Activated B cell treated with CpG ODN at 0.5 μM for 24 hours (primary cell): ENCODE measurements at regions of chr5 and their contacts with region 1.

Region 1: GRCh38 chr5:179732417-179732917 is at the start of gene MAML1:
- DNase-seq: peak; percentile 98
- ATAC-seq: peak; percentile 93
- H3K4me3 Mint-ChIP-seq: peak within 1 kb of the TSS; percentile 93
- H3K27ac Mint-ChIP-seq: peak within 1 kb of the TSS; percentile 91
- H3K4me1 Mint-ChIP-seq: peaks cover 37% of the 10 kb centered on the region
- H3K27me3 Mint-ChIP-seq: no peaks in the 10 kb centered on the region
- CTCF ChIP-seq: no peak
- total RNA-seq, gene MAML1: 33.6 and 38.8 TPM in 2 replicates

Region 2: DNA sequence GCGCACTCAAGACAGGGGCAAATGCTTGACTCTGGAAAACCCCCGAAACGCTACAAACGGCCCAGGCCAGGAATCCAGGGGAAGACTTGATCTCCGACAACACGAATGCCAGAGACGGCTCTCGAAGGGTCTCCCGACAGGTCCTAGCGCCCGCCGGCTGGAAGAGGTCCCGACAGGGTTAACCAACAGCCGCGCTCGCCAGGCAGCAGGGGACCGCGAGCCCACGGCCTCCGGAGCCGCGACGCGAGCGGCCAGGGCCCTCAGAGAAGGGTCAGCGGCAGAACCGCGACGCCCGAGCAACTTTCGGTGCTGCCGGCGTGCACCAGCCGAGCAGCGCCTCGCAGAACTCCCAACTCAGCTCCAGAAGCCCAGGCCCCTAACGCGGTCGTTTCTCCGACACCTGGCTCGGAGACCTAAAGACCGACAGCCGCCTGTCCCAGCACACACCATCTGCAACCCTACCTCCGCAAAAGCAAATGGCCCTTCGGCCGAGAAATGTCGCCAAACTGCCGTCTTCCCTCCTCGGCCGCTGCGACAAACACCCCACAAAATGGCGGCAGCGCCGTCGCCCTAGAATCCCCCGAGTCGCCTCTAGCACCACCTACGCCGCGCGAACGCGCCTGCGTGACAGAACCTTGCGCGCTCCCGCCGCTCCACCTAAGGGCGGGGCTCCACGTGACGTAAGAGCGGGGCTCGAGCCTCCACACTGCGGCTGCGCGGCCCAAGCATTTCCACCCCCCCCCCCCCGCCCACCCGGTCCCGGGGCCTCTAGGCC is 1105.8 kb before region 1 on chr5 and contains the start of gene CLK4:
- CTCF ChIA-PET with region 1: no interaction called
- POLR2A ChIA-PET with region 1: no interaction called
- intact Hi-C with region 1: loop called (anchors 10 kb)
- DNase-seq: peak; percentile 97
- ATAC-seq: peak; percentile 85
- H3K4me3 Mint-ChIP-seq: peak within 1 kb of the TSS; percentile 98
- H3K27ac Mint-ChIP-seq: peak within 1 kb of the TSS; percentile 98
- H3K4me1 Mint-ChIP-seq: peaks cover 59% of the 10 kb centered on the region
- H3K27me3 Mint-ChIP-seq: no peaks in the 10 kb centered on the region
- CTCF ChIP-seq: no peak
- total RNA-seq, gene CLK4: 62.4 and 65.3 TPM in 2 replicates

Region 3: GRCh38 chr5:179550511-179551230 is 181.8 kb before region 1 on chr5 and contains the start of gene RUFY1:
- CTCF ChIA-PET with region 1: no interaction called
- POLR2A ChIA-PET with region 1: interaction called, 5 read pairs
- intact Hi-C with region 1: loop called (anchors 2 kb)
- DNase-seq: peak; percentile 91
- ATAC-seq: peak; percentile 70
- H3K4me3 Mint-ChIP-seq: peak within 1 kb of the TSS; percentile 97
- H3K27ac Mint-ChIP-seq: peak within 1 kb of the TSS; percentile 100
- H3K4me1 Mint-ChIP-seq: peaks cover 60% of the 10 kb centered on the region
- H3K27me3 Mint-ChIP-seq: no peaks in the 10 kb centered on the region
- CTCF ChIP-seq: no peak
- total RNA-seq, gene RUFY1: 83.0 and 95.8 TPM in 2 replicates

Region 4: GRCh38 chr5:179697993-179698934 is 34.2 kb before region 1 on chr5:
- CTCF ChIA-PET with region 1: interaction called, 3 read pairs
- POLR2A ChIA-PET with region 1: interaction called, 35 read pairs
- intact Hi-C with region 1: loop called (anchors 1 kb)
- DNase-seq: peak; percentile 96
- ATAC-seq: peak; percentile 89
- H3K4me3 Mint-ChIP-seq: peak overlapping the region; percentile 97
- H3K27ac Mint-ChIP-seq: peak overlapping the region; percentile 99
- H3K4me1 Mint-ChIP-seq: peaks cover 41% of the 10 kb centered on the region
- H3K27me3 Mint-ChIP-seq: no peaks in the 10 kb centered on the region
- CTCF ChIP-seq: no peak

Region 5: DNA sequence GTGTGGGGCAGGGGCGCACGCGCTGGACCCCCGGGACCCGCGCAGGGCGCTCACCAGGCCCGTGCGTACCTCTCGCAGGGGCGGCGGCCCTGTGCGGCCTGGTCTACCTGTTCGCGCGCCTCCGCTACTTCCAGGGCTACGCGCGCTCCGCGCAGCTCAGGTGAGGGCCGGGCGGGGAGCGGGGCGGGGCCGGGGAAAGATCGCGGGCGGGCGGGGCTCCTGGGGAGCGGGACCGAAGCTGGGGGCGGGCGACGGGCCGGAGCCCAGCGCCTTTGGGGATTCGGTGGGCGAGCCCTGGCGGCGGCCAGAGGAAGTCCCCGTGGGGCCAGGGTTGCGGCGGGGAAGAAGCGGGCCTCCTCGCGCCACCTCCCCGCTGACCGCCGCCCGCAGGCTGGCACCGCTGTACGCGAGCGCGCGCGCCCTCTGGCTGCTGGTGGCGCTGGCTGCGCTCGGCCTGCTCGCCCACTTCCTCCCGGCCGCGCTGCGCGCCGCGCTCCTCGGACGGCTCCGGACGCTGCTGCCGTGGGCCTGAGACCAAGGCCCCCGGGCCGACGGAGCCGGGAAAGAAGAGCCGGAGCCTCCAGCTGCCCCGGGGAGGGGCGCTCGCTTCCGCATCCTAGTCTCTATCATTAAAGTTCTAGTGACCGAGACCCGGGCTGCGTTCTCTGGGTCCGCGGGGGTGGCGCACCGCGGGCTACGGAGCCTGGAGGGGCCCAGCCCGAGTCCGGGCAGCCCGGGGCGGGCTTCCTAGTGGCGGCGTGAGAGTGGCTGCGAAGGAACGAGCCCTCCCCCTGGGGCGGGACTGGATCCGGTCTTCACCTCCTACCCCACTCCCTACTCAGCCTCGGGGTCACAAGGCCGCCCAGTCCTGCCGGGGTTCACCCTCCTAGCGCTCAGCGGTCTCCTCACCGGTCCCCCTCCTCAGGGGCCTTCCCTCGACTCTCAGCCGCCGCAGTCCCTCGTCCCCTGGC is 63.7 kb after region 1 on chr5:
- CTCF ChIA-PET with region 1: no interaction called
- POLR2A ChIA-PET with region 1: interaction called, 14 read pairs
- intact Hi-C with region 1: loop called (anchors 2 kb)
- DNase-seq: peak; percentile 78
- ATAC-seq: peak; percentile 78
- H3K4me3 Mint-ChIP-seq: peak overlapping the region; percentile 64
- H3K27ac Mint-ChIP-seq: peak overlapping the region; percentile 7
- H3K4me1 Mint-ChIP-seq: peaks cover 29% of the 10 kb centered on the region
- H3K27me3 Mint-ChIP-seq: no peaks in the 10 kb centered on the region
- CTCF ChIP-seq: peak; percentile 32

Region 6: GRCh38 chr5:179858586-179859427 is 126.3 kb after region 1 on chr5 and contains the start of gene MRNIP:
- CTCF ChIA-PET with region 1: no interaction called
- POLR2A ChIA-PET with region 1: no interaction called
- intact Hi-C with region 1: loop called (anchors 2 kb)
- DNase-seq: peak; percentile 92
- ATAC-seq: peak; percentile 94
- H3K4me3 Mint-ChIP-seq: peak within 1 kb of the TSS; percentile 96
- H3K27ac Mint-ChIP-seq: peak within 1 kb of the TSS; percentile 89
- H3K4me1 Mint-ChIP-seq: peaks cover 33% of the 10 kb centered on the region
- H3K27me3 Mint-ChIP-seq: no peaks in the 10 kb centered on the region
- CTCF ChIP-seq: no peak
- total RNA-seq, gene MRNIP: 54.6 and 70.0 TPM in 2 replicates

Region 7: DNA sequence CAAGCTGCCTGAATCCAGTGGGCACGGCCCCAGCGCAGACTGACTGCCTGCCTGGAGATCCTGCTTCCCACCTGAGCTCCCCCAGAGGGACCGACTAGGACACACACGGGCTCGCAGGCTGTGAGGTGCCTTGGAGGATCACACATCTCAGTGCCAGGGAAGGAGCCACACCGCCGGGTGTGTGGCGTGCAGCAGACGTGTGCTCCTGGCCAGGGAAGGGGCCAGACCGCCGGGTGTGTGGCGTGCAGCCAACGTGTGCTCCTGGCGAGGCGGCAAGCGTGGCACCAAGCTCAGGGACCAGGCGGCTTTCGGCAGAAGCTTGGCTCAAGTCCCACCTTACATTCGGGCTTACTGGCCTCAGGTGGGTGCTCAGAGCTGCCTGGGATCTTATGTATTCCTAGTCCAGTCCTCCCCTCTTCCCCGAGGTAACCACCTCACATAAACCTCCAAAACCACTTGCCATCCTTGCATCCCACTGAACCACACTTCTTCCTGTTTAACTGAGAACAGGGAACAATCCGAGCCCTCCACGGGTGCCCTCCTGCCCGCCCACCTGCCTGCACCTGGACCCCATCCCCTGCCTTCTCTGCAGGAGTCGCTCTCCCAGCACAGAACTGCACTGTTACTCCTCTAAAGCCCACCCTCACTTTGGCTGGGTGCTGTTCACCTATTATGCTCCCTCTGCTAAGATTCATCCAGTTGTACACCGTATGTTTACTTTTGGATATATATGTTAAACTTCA is 148.6 kb after region 1 on chr5:
- CTCF ChIA-PET with region 1: no interaction called
- POLR2A ChIA-PET with region 1: no interaction called
- intact Hi-C with region 1: no loop called
- DNase-seq: no peak
- ATAC-seq: no peak
- H3K4me3 Mint-ChIP-seq: no peak overlapping the region
- H3K27ac Mint-ChIP-seq: no peak overlapping the region
- H3K4me1 Mint-ChIP-seq: no peaks in the 10 kb centered on the region
- H3K27me3 Mint-ChIP-seq: no peaks in the 10 kb centered on the region
- CTCF ChIP-seq: no peak

Region 8: GRCh38 chr5:179974946-179975712 is 242.7 kb after region 1 on chr5:
- CTCF ChIA-PET with region 1: interaction called, 4 read pairs
- POLR2A ChIA-PET with region 1: interaction called, 4 read pairs
- intact Hi-C with region 1: loop called (anchors 1 kb)
- DNase-seq: peak; percentile 58
- ATAC-seq: peak; percentile 84
- H3K4me3 Mint-ChIP-seq: no peak overlapping the region
- H3K27ac Mint-ChIP-seq: peak overlapping the region; percentile 76
- H3K4me1 Mint-ChIP-seq: peaks cover 51% of the 10 kb centered on the region
- H3K27me3 Mint-ChIP-seq: no peaks in the 10 kb centered on the region
- CTCF ChIP-seq: no peak